Naive thymus-derived CD4-positive, alpha-beta T cell (primary cell): ENCODE measurements at regions of chr10 and their contacts with region 1.

Region 1: GRCh38 chr10:91797874-91798648 is at the start of gene TNKS2:
- DNase-seq: peak; percentile 86 to 97 (median 92)
- ATAC-seq: peak; percentile 87
- H3K4me3 ChIP-seq: peak within 1 kb of the TSS; percentile 87
- H3K4me3 Mint-ChIP-seq: peak within 1 kb of the TSS; percentile 95 to 100 (median 98)
- H3K27ac ChIP-seq: peak within 1 kb of the TSS; percentile 92
- H3K27ac Mint-ChIP-seq: peak within 1 kb of the TSS; percentile 92 to 100 (median 96)
- H3K4me1 ChIP-seq: peaks cover 26 to 37% of the 10 kb centered on the region in 2 donors
- H3K4me1 Mint-ChIP-seq: peaks cover 37 to 73% (median 69%) of the 10 kb centered on the region in 7 donors
- H3K27me3 ChIP-seq: no peaks in the 10 kb centered on the region
- H3K27me3 Mint-ChIP-seq: no peaks in the 10 kb centered on the region
- total RNA-seq, gene TNKS2: 35.0 to 57.3 (median 41.5) TPM

Region 2: DNA sequence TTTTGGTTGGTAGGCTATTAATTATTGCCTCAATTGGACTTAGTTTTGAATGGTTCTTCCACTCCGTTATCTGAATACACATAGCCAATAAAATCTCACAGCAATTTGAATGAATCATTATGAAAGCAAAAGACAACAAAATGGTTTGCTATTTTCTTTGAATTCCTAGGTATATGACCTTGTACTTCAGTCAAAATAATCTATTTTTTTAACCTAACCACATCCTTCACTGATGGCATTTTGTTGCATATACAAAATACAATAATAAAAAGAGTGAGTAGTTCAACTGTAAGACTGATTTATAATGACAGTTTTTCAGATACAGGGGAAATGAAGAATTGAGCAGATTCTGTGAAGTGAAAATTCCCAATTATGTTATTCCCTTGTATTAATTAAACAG is 1373.3 kb before region 1 on chr10:
- CTCF ChIA-PET with region 1: no interaction called
- POLR2A ChIA-PET with region 1: no interaction called
- intact Hi-C with region 1: no loop called
- DNase-seq: no peak
- ATAC-seq: no peak
- H3K4me3 ChIP-seq: no peak overlapping the region
- H3K4me3 Mint-ChIP-seq: no peak overlapping the region
- H3K27ac ChIP-seq: no peak overlapping the region
- H3K27ac Mint-ChIP-seq: no peak overlapping the region
- H3K4me1 ChIP-seq: no peaks in the 10 kb centered on the region
- H3K4me1 Mint-ChIP-seq: peaks cover 0 to 1% (median 0%) of the 10 kb centered on the region in 7 donors
- H3K27me3 ChIP-seq: no peaks in the 10 kb centered on the region
- H3K27me3 Mint-ChIP-seq: peaks cover 0 to 8% (median 0%) of the 10 kb centered on the region in 5 donors

Region 3: DNA sequence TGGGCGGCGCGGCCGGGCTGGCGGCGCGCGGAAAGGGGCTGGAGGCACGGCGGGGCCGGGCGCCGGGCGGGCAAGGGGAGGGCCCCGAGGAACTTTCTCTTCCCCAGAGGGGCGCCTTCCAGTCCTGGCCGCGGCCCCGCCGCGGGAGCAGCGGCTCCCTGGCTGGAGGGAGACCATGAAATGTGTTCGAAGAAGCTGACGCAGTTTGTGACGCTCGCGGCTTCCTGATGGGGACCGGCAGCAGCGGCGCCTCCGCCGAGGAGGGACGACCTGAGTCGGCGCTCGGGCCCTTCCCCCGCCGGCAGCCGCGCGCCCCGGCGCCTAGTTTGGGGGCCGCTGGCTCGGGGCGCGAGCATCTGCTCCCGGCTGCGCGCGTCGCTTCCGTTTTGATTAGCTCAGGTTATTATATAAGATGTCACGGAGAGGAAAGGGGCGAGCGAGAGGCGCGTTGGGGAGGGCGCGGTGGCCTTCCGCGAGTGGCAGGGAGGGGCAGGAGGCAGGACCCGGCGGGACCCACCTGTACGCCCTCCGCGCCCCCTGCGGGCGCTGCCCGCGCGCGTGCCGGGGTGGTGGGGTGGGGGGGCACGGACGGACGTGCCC is 634.7 kb before region 1 on chr10:
- CTCF ChIA-PET with region 1: no interaction called
- POLR2A ChIA-PET with region 1: no interaction called
- intact Hi-C with region 1: loop called in 1 of 2 experiments (anchors 2 kb)
- DNase-seq: peak; percentile 72 to 92 (median 88)
- ATAC-seq: peak; percentile 75
- H3K4me3 ChIP-seq: peak overlapping the region; percentile 74
- H3K4me3 Mint-ChIP-seq: peak overlapping the region; percentile 88 to 95 (median 93)
- H3K27ac ChIP-seq: peak overlapping the region; percentile 96
- H3K27ac Mint-ChIP-seq: peak overlapping the region; percentile 88 to 98 (median 95)
- H3K4me1 ChIP-seq: peaks cover 8 to 20% of the 10 kb centered on the region in 2 donors
- H3K4me1 Mint-ChIP-seq: peaks cover 27 to 61% (median 51%) of the 10 kb centered on the region in 7 donors
- H3K27me3 ChIP-seq: no peaks in the 10 kb centered on the region
- H3K27me3 Mint-ChIP-seq: peaks cover 0 to 19% (median 0%) of the 10 kb centered on the region in 5 donors

Region 4: GRCh38 chr10:91409869-91410637 is 388.0 kb before region 1 on chr10 and contains the start of gene HECTD2:
- CTCF ChIA-PET with region 1: interaction called, 4 read pairs
- POLR2A ChIA-PET with region 1: no interaction called
- intact Hi-C with region 1: loop called (anchors 1 to 5 kb)
- DNase-seq: peak; percentile 76 to 89 (median 86)
- ATAC-seq: peak; percentile 93
- H3K4me3 ChIP-seq: peak within 1 kb of the TSS; percentile 83
- H3K4me3 Mint-ChIP-seq: peak within 1 kb of the TSS; percentile 75 to 93 (median 90)
- H3K27ac ChIP-seq: peak within 1 kb of the TSS; percentile 88
- H3K27ac Mint-ChIP-seq: peak within 1 kb of the TSS; percentile 81 to 96 (median 91)
- H3K4me1 ChIP-seq: peaks cover 8 to 17% of the 10 kb centered on the region in 2 donors
- H3K4me1 Mint-ChIP-seq: peaks cover 8 to 18% (median 13%) of the 10 kb centered on the region in 7 donors
- H3K27me3 ChIP-seq: no peaks in the 10 kb centered on the region
- H3K27me3 Mint-ChIP-seq: peaks cover 0 to 27% (median 0%) of the 10 kb centered on the region in 5 donors
- total RNA-seq, gene HECTD2: 1.1 to 4.6 (median 2.0) TPM

Region 5: DNA sequence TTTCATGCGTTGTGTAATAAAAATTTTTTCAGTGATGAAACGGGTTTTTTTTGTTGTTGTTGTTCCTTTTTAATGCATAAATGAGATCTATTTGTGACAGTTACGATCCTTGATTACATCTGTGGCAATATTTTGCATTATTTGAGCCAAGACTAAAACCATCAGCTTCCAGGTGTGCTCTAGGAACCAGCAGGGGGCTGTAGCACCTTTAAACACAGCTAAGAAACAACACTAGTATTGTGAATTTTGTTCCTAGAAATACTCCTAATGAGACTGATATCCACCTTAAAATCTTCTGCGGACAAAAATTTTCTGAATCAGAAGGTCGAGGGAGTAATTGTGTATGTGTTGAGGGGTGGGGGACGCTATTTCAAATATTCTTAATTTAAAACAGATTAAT is 58.6 kb after region 1 on chr10:
- CTCF ChIA-PET with region 1: no interaction called
- POLR2A ChIA-PET with region 1: no interaction called
- intact Hi-C with region 1: loop called in 1 of 2 experiments (anchors 5 kb)
- DNase-seq: no peak
- ATAC-seq: no peak
- H3K4me3 ChIP-seq: no peak overlapping the region
- H3K4me3 Mint-ChIP-seq: no peak overlapping the region
- H3K27ac ChIP-seq: no peak overlapping the region
- H3K27ac Mint-ChIP-seq: peak overlapping the region in 1 of 9 donors; percentile 7
- H3K4me1 ChIP-seq: no peaks in the 10 kb centered on the region
- H3K4me1 Mint-ChIP-seq: peaks cover 0 to 2% (median 0%) of the 10 kb centered on the region in 7 donors
- H3K27me3 ChIP-seq: no peaks in the 10 kb centered on the region
- H3K27me3 Mint-ChIP-seq: no peaks in the 10 kb centered on the region

Region 6: GRCh38 chr10:92290837-92291615 is 493.0 kb after region 1 on chr10 and contains the starts of genes CPEB3 and MARCHF5:
- CTCF ChIA-PET with region 1: no interaction called
- POLR2A ChIA-PET with region 1: interaction called, 4 read pairs
- intact Hi-C with region 1: loop called (anchors 1 kb)
- DNase-seq: peak; percentile 77 to 92 (median 85)
- ATAC-seq: peak; percentile 99
- H3K4me3 ChIP-seq: peak within 1 kb of the TSS; percentile 90
- H3K4me3 Mint-ChIP-seq: peak within 1 kb of the TSS; percentile 85 to 97 (median 95)
- H3K27ac ChIP-seq: peak within 1 kb of the TSS; percentile 90
- H3K27ac Mint-ChIP-seq: peak within 1 kb of the TSS; percentile 75 to 96 (median 88)
- H3K4me1 ChIP-seq: peaks cover 0 to 6% of the 10 kb centered on the region in 2 donors
- H3K4me1 Mint-ChIP-seq: peaks cover 21 to 41% (median 31%) of the 10 kb centered on the region in 7 donors
- H3K27me3 ChIP-seq: no peaks in the 10 kb centered on the region
- H3K27me3 Mint-ChIP-seq: no peaks in the 10 kb centered on the region
- total RNA-seq, gene CPEB3: 2.0 to 3.3 (median 2.2) TPM
- total RNA-seq, gene MARCHF5: 22.0 to 37.1 (median 33.8) TPM

Region 7: GRCh38 chr10:92848441-92849233 is 1050.6 kb after region 1 on chr10 and contains the start of gene EXOC6:
- CTCF ChIA-PET with region 1: no interaction called
- POLR2A ChIA-PET with region 1: no interaction called
- intact Hi-C with region 1: loop called in 1 of 2 experiments (anchors 1 kb)
- DNase-seq: peak; percentile 78 to 93 (median 91)
- ATAC-seq: peak; percentile 91
- H3K4me3 ChIP-seq: peak within 1 kb of the TSS; percentile 70
- H3K4me3 Mint-ChIP-seq: peak within 1 kb of the TSS; percentile 81 to 94 (median 91)
- H3K27ac ChIP-seq: peak within 1 kb of the TSS; percentile 95
- H3K27ac Mint-ChIP-seq: peak within 1 kb of the TSS; percentile 56 to 95 (median 92)
- H3K4me1 ChIP-seq: peaks cover 7 to 19% of the 10 kb centered on the region in 2 donors
- H3K4me1 Mint-ChIP-seq: peaks cover 4 to 48% (median 36%) of the 10 kb centered on the region in 7 donors
- H3K27me3 ChIP-seq: no peaks in the 10 kb centered on the region
- H3K27me3 Mint-ChIP-seq: no peaks in the 10 kb centered on the region
- total RNA-seq, gene EXOC6: 8.1 to 12.1 (median 11.4) TPM

Region 8: GRCh38 chr10:93702211-93703001 is 1904.3 kb after region 1 on chr10 and contains the start of gene FRA10AC1:
- CTCF ChIA-PET with region 1: no interaction called
- POLR2A ChIA-PET with region 1: no interaction called
- intact Hi-C with region 1: loop called (anchors 5 kb)
- DNase-seq: peak; percentile 77 to 92 (median 85)
- ATAC-seq: peak; percentile 97
- H3K4me3 ChIP-seq: peak within 1 kb of the TSS; percentile 85
- H3K4me3 Mint-ChIP-seq: no peak within 1 kb of the TSS
- H3K27ac ChIP-seq: peak within 1 kb of the TSS; percentile 73
- H3K27ac Mint-ChIP-seq: no peak within 1 kb of the TSS
- H3K4me1 ChIP-seq: peaks cover 9 to 16% of the 10 kb centered on the region in 2 donors
- H3K4me1 Mint-ChIP-seq: peaks cover 8 to 29% (median 11%) of the 10 kb centered on the region in 7 donors
- H3K27me3 ChIP-seq: no peaks in the 10 kb centered on the region
- H3K27me3 Mint-ChIP-seq: no peaks in the 10 kb centered on the region
- total RNA-seq, gene FRA10AC1: 15.5 to 31.0 (median 22.7) TPM